Panc1 (cell line): ENCODE measurements at regions of chr21 and their contacts with region 1.

Region 1: GRCh38 chr21:35041122-35041521 is 8.0 kb downstream of the RUNX1 start:
- DNase-seq: no peak
- ATAC-seq: no peak
- H3K4me3 ChIP-seq: no peak overlapping the region
- H3K27ac ChIP-seq: no peak overlapping the region
- H3K4me1 ChIP-seq: no peaks in the 10 kb centered on the region
- H3K27me3 ChIP-seq: no peaks in the 10 kb centered on the region
- CTCF ChIP-seq: no peak

Region 2: GRCh38 chr21:35026617-35027562 is 14.2 kb before region 1 on chr21:
- CTCF ChIA-PET with region 1: interaction called, 12 read pairs
- POLR2A ChIA-PET with region 1: no interaction called
- in situ Hi-C with region 1: no loop called
- intact Hi-C with region 1: no loop called
- DNase-seq: no peak
- ATAC-seq: peak; percentile 85
- H3K4me3 ChIP-seq: peak overlapping the region; percentile 19 to 38
- H3K27ac ChIP-seq: no peak overlapping the region
- H3K4me1 ChIP-seq: no peaks in the 10 kb centered on the region
- H3K27me3 ChIP-seq: no peaks in the 10 kb centered on the region
- CTCF ChIP-seq: no peak

Region 3: GRCh38 chr21:35427320-35428000 is 386.3 kb after region 1 on chr21:
- CTCF ChIA-PET with region 1: no interaction called
- POLR2A ChIA-PET with region 1: interaction called, 16 read pairs
- in situ Hi-C with region 1: no loop called
- intact Hi-C with region 1: no loop called
- DNase-seq: no peak
- ATAC-seq: no peak
- H3K4me3 ChIP-seq: no peak overlapping the region
- H3K27ac ChIP-seq: no peak overlapping the region
- H3K4me1 ChIP-seq: no peaks in the 10 kb centered on the region
- H3K27me3 ChIP-seq: peaks cover 2% of the 10 kb centered on the region
- CTCF ChIP-seq: no peak

Region 4: GRCh38 chr21:35971824-35972223 is 930.7 kb after region 1 on chr21:
- CTCF ChIA-PET with region 1: interaction called, 12 read pairs
- POLR2A ChIA-PET with region 1: no interaction called
- in situ Hi-C with region 1: no loop called
- intact Hi-C with region 1: no loop called
- DNase-seq: no peak
- ATAC-seq: no peak
- H3K4me3 ChIP-seq: no peak overlapping the region
- H3K27ac ChIP-seq: no peak overlapping the region
- H3K4me1 ChIP-seq: no peaks in the 10 kb centered on the region
- H3K27me3 ChIP-seq: no peaks in the 10 kb centered on the region
- CTCF ChIP-seq: no peak